PC-9 (cell line): ENCODE measurements at regions of chr10 and their contacts with region 1.

Region 1: GRCh38 chr10:21364196-21365114 is 161.0 kb downstream of the SKIDA1 start:
- DNase-seq: peak; percentile 88 to 97
- H3K4me3 ChIP-seq: peak overlapping the region; percentile 48; the same call in 1 of the 2 replicates
- H3K27ac ChIP-seq: peak overlapping the region; percentile 100
- H3K4me1 ChIP-seq: peaks cover 75% of the 10 kb centered on the region
- H3K27me3 ChIP-seq: no peaks in the 10 kb centered on the region
- CTCF ChIP-seq: no peak

Region 2: DNA sequence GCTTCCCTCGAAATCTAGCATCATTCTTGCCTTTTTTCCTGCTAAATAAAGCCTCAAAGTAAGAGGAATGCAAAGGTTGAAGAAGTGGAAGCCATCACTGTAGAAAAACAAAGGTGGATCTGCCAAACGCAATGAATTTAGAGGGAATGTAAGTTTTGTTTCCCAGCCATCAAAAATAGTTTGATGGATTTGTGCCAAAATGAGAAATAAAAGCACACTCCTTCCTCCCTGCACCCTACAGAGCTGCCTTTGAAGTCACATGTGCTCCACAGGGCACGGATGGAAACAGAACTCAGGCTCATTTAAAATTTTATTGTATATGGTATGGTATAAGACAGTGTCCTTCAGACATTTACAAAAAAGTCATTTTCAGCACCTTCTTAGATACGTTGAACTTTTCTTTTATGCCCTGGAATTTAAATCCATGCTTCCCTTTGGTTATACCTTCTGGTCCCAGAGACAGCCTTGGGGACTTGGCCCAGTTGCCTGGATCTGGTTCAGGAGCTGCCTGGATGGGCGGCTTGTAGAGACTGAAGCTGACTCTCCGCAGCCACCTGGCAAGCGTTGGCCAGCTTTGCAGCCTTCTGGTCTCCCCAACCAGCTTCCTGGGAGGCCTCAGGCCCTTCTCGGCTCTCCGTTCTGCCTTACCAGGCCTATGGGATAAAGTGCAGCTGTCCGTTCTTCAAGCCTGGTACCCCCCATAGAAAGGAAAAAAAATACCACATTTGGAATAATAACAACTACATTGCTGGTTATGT is 238.8 kb before region 1 on chr10:
- CTCF ChIA-PET with region 1: no interaction called
- POLR2A ChIA-PET with region 1: interaction called, 10 read pairs
- intact Hi-C with region 1: no loop called
- DNase-seq: no peak
- H3K4me3 ChIP-seq: no peak overlapping the region
- H3K27ac ChIP-seq: no peak overlapping the region
- H3K4me1 ChIP-seq: no peaks in the 10 kb centered on the region
- H3K27me3 ChIP-seq: no peaks in the 10 kb centered on the region
- CTCF ChIP-seq: no peak

Region 3: GRCh38 chr10:21278491-21279239 is 85.8 kb before region 1 on chr10:
- CTCF ChIA-PET with region 1: no interaction called
- POLR2A ChIA-PET with region 1: no interaction called
- intact Hi-C with region 1: loop called (anchors 1 kb)
- DNase-seq: peak; percentile 71 to 90
- H3K4me3 ChIP-seq: no peak overlapping the region
- H3K27ac ChIP-seq: 0 out of 2 replicates have a peak overlapping the region, but pooled peaks have one; percentile 25
- H3K4me1 ChIP-seq: peaks cover 19% of the 10 kb centered on the region
- H3K27me3 ChIP-seq: no peaks in the 10 kb centered on the region
- CTCF ChIP-seq: peak; percentile 89

Region 4: DNA sequence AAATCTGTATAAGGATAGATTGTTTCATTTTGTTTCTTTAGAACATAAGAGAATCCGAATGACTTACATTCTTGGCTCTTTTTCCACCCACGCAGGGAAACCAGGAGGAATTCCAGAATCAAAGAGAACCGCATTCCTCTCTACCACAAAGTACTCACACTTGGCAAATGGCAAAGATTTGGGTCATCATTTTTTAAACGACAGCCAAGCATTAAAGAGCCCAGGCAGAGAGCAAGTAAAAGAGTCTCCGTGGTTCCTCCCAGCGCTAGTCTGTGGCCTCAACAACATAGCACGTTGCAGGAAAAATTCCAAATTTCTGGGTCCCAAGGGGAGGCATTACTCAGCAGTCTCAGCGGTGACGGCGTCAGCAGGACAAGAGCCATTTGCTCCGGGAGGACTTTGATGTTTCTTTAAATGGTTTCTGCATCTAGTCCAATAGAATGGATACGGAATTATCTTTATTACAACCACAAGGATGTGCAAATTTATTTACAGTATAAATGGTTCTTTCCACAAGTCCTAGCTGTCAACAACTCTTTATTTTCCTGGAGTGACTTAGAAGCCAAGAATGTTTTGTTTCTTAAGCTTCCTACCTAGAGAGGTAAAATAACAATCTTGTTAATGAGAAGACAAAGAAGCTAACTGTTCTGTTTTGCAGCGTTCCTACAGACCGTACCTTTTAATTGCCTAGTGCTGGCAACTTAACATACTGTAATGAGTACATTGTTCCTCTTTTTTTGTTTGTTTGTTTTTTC is 71.5 kb before region 1 on chr10:
- CTCF ChIA-PET with region 1: interaction called, 4 read pairs
- POLR2A ChIA-PET with region 1: no interaction called
- intact Hi-C with region 1: loop called (anchors 2 kb)
- DNase-seq: peak; percentile 77 to 87
- H3K4me3 ChIP-seq: peak overlapping the region; percentile 51; the same call in 1 of the 2 replicates
- H3K27ac ChIP-seq: peak overlapping the region; percentile 85
- H3K4me1 ChIP-seq: peaks cover 32% of the 10 kb centered on the region
- H3K27me3 ChIP-seq: no peaks in the 10 kb centered on the region
- CTCF ChIP-seq: no peak

Region 5: GRCh38 chr10:21406595-21407193 is 42.2 kb after region 1 on chr10:
- CTCF ChIA-PET with region 1: no interaction called
- POLR2A ChIA-PET with region 1: interaction called, 11 read pairs
- intact Hi-C with region 1: no loop called
- DNase-seq: no peak
- H3K4me3 ChIP-seq: no peak overlapping the region
- H3K27ac ChIP-seq: no peak overlapping the region
- H3K4me1 ChIP-seq: no peaks in the 10 kb centered on the region
- H3K27me3 ChIP-seq: no peaks in the 10 kb centered on the region
- CTCF ChIP-seq: no peak

Region 6: DNA sequence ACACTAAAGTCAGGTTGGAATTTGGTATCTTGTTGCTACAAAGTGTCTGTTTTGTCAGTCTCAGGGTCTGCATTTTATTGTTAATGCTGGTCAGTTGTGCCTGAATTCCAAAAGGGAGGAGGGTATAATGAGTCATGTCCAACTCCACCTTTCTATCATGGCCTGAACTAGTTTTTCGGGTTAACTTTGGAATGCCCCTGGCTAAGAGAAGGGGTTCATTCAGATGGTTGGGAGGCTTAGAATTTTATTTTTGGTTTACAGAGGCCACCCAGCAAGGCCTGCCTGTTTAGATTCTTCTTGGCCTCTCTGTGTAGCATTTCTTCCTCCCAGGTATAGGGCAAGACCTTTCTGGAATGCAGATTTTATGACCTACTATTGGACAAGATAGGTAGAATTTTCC is 67.8 kb after region 1 on chr10:
- CTCF ChIA-PET with region 1: no interaction called
- POLR2A ChIA-PET with region 1: no interaction called
- intact Hi-C with region 1: loop called (anchors 1 kb)
- DNase-seq: peak; percentile 57 to 81
- H3K4me3 ChIP-seq: no peak overlapping the region
- H3K27ac ChIP-seq: peak overlapping the region; percentile 82
- H3K4me1 ChIP-seq: peaks cover 22% of the 10 kb centered on the region
- H3K27me3 ChIP-seq: no peaks in the 10 kb centered on the region
- CTCF ChIP-seq: no peak

Region 7: GRCh38 chr10:21464143-21464533 is 99.7 kb after region 1 on chr10:
- CTCF ChIA-PET with region 1: no interaction called
- POLR2A ChIA-PET with region 1: no interaction called
- intact Hi-C with region 1: no loop called
- DNase-seq: peak; percentile 61 to 67
- H3K4me3 ChIP-seq: no peak overlapping the region
- H3K27ac ChIP-seq: no peak overlapping the region
- H3K4me1 ChIP-seq: no peaks in the 10 kb centered on the region
- H3K27me3 ChIP-seq: no peaks in the 10 kb centered on the region
- CTCF ChIP-seq: no peak

Region 8: GRCh38 chr10:21525367-21526183 is 161.1 kb after region 1 on chr10 and contains the start of gene SKIDA1:
- CTCF ChIA-PET with region 1: no interaction called
- POLR2A ChIA-PET with region 1: no interaction called
- intact Hi-C with region 1: loop called (anchors 2 kb)
- DNase-seq: peak; percentile 85
- H3K4me3 ChIP-seq: peak within 1 kb of the TSS; percentile 71
- H3K27ac ChIP-seq: peak within 1 kb of the TSS; percentile 79
- H3K4me1 ChIP-seq: peaks cover 32% of the 10 kb centered on the region
- H3K27me3 ChIP-seq: no peaks in the 10 kb centered on the region
- CTCF ChIP-seq: no peak
- total RNA-seq, gene SKIDA1: 0.65 and 1.1 TPM in 2 replicates